Spleen (tissue), 13 donors: ENCODE measurements at regions of chr13 and their contacts with region 1.

Region 1: GRCh38 chr13:39616087-39616694 is 13.2 kb upstream of the LHFPL6 start:
- DNase-seq: no peak
- H3K4me3 ChIP-seq: no peak overlapping the region
- H3K27ac ChIP-seq: no peak overlapping the region
- H3K4me1 ChIP-seq: peaks cover 0 to 6% (median 0%) of the 10 kb centered on the region in 6 donors
- H3K27me3 ChIP-seq: no peaks in the 10 kb centered on the region
- CTCF ChIP-seq: peak in 10 of 11 experiments; percentile 25 to 84 (median 74)
- POLR2A ChIP-seq: no peak

Region 2: DNA sequence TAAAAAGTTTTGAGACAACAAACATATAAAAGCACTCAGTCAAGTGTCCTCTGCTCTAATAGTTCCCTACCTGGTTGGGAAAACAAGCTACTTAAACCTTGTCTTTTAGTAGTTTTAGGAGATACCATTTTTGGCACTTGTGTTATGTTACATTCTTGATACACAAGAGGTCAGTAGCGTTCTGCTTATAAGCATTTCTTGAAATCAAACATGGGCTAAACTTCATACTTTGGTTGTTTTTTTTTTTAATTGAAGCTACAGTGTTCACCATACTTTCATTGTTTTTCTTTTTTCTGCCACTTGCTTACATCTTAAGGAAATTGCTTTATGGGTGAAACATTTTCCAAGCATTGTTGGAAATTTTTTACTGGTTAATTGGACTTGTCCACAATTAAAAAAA is 565.0 kb before region 1 on chr13:
- intact Hi-C with region 1: loop called (anchors 10 kb)
- DNase-seq: no peak
- H3K4me3 ChIP-seq: no peak overlapping the region
- H3K27ac ChIP-seq: no peak overlapping the region
- H3K4me1 ChIP-seq: peaks cover 0 to 39% (median 3%) of the 10 kb centered on the region in 6 donors
- H3K27me3 ChIP-seq: no peaks in the 10 kb centered on the region
- CTCF ChIP-seq: peak in 5 of 11 experiments; percentile 15 to 42 (median 30)
- POLR2A ChIP-seq: no peak

Region 3: GRCh38 chr13:39144941-39145533 is 471.2 kb before region 1 on chr13:
- intact Hi-C with region 1: loop called (anchors 5 kb)
- DNase-seq: no peak
- H3K4me3 ChIP-seq: peak overlapping the region in 1 of 8 donors; percentile 13
- H3K27ac ChIP-seq: no peak overlapping the region
- H3K4me1 ChIP-seq: peaks cover 0 to 4% (median 0%) of the 10 kb centered on the region in 6 donors
- H3K27me3 ChIP-seq: no peaks in the 10 kb centered on the region
- CTCF ChIP-seq: peak in 10 of 11 experiments; percentile 10 to 66 (median 52)
- POLR2A ChIP-seq: no peak

Region 4: DNA sequence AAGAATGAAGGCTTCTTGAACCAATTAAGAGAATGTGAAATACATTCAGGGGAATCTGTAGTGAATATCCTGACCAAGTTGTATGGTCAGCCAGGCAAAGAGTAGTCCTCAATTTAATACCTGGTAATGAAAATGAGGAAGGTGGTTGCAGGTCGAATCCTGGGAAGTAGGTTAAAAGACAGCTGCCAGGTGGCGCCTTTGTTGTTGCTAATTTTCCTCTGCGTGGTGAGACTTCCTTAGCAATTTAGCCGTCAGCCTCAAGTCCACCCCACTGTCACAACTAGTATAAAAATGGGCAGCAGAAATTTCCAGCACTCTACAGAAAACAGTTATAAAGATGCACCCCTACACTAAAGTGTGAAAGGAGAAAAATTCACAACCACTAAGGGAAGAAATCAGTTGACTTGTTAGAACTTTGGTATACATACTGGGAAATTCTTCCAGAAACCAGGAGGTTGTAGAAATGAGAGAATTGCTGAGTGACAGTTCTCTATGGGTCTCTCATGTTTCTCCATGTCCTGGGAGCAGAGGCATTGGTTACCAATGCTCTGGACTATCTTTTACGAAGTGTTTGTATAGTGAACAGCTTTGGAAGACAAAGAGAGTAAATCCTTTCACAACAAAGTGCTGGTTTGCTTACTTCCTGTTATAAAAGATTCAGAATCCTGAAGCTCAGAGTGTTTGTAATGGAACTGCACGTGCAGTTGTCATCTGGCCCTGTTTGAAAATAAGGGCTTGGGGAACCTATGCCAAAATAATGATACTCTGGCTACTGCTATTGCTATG is 342.0 kb before region 1 on chr13:
- intact Hi-C with region 1: loop called (anchors 10 kb)
- DNase-seq: no peak
- H3K4me3 ChIP-seq: no peak overlapping the region
- H3K27ac ChIP-seq: no peak overlapping the region
- H3K4me1 ChIP-seq: peaks cover 0 to 2% (median 0%) of the 10 kb centered on the region in 6 donors
- H3K27me3 ChIP-seq: no peaks in the 10 kb centered on the region
- CTCF ChIP-seq: no peak
- POLR2A ChIP-seq: no peak

Region 5: DNA sequence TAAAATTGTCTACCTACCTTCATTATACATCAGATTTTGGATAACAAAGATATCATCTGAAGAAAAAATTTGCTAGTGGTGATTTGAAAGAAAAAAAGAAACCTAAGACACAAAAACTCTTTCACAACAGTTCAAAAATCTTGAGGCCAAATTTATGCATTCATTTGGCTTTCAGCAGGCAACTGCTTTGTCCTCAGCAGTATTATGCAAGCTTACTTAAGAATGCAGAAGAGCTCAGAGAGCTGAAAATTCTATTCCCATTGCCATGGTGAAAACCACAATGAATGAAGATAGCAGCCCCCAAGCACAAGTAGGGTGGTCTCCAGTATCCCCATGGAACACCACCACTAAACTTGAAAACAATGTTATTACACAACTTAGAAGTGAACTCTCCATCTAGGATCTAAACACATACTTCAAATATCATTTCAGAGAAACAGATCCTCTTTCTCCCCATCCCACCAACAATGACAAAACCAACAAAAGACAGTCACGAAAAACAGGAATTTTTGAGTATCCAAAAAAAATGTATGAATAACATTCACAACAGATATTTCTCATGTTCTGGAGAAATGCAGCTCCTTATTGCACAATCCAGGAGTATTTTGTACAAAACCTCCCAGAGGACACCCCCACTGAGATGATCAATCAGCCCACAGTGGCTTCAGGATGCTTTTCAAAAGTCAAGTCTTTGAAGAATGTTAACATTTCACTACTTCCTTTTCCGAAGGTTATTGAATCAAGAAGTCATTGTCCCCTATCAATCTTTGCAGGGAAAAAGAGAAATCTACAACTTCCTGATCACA is 205.9 kb before region 1 on chr13:
- intact Hi-C with region 1: loop called (anchors 5 kb)
- DNase-seq: no peak
- H3K4me3 ChIP-seq: no peak overlapping the region
- H3K27ac ChIP-seq: peak overlapping the region in 3 of 8 donors; percentile 2 to 48 (median 25)
- H3K4me1 ChIP-seq: peaks cover 3 to 46% (median 15%) of the 10 kb centered on the region in 6 donors
- H3K27me3 ChIP-seq: no peaks in the 10 kb centered on the region
- CTCF ChIP-seq: no peak
- POLR2A ChIP-seq: no peak

Region 6: GRCh38 chr13:39577838-39578491 is 38.2 kb before region 1 on chr13:
- intact Hi-C with region 1: no loop called
- DNase-seq: no peak
- H3K4me3 ChIP-seq: no peak overlapping the region
- H3K27ac ChIP-seq: no peak overlapping the region
- H3K4me1 ChIP-seq: no peaks in the 10 kb centered on the region
- H3K27me3 ChIP-seq: no peaks in the 10 kb centered on the region
- CTCF ChIP-seq: no peak
- POLR2A ChIP-seq: no peak

Region 7: DNA sequence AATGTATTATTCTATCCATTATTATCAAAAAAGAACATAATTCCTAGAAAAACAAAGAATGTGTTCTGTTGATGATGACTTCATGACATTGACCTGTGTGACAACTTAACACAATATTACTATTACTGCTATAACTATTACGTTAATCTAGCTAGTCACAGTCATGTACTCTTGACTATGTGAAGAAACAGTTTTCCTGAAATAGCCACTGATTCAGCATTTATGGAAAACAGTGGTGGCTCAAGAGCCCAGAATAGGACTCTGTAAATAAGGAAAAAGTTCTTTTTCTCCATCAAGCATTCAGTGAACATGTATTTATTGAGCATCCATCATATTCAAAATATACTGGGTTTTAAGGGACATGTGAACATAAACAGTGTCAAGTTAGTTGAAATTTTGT is 132.8 kb after region 1 on chr13:
- intact Hi-C with region 1: no loop called
- DNase-seq: no peak
- H3K4me3 ChIP-seq: no peak overlapping the region
- H3K27ac ChIP-seq: no peak overlapping the region
- H3K4me1 ChIP-seq: no peaks in the 10 kb centered on the region
- H3K27me3 ChIP-seq: no peaks in the 10 kb centered on the region
- CTCF ChIP-seq: no peak
- POLR2A ChIP-seq: no peak